CD4-positive, alpha-beta memory T cell (primary cell): ENCODE measurements at regions of chr7 and their contacts with region 1.

Region 1: GRCh38 chr7:33932832-33933468 is 27.6 kb downstream of the BMPER start:
- DNase-seq: peak; percentile 40 to 49 (median 47)
- H3K4me3 ChIP-seq: no peak overlapping the region
- H3K4me3 Mint-ChIP-seq: no peak overlapping the region
- H3K27ac ChIP-seq: no peak overlapping the region
- H3K27ac Mint-ChIP-seq: no peak overlapping the region
- H3K4me1 ChIP-seq: no peaks in the 10 kb centered on the region
- H3K4me1 Mint-ChIP-seq: peaks cover 0 to 3% (median under 1%) of the 10 kb centered on the region in 4 donors
- H3K27me3 ChIP-seq: no peaks in the 10 kb centered on the region
- H3K27me3 Mint-ChIP-seq: peaks cover 1 to 4% of the 10 kb centered on the region in 2 donors

Region 2: DNA sequence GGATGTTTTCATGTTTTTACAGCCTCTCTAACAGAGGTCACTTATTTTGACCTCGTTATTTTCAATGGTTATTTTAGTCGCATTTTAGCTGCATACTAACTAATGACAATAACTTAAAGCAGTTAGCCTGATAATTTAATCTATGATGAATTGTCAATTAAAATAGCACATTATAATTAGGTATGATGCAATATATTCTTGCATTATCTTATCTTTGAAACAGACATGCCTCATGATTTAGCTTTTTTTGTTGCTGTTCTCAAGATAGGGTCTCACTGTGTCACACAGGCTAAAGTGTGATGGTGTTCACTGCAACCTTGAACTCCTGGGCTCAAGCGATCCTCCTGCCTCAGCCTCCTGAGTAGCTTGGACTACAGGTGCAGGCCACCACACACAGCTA is 1167.8 kb before region 1 on chr7:
- CTCF ChIA-PET with region 1: interaction called, 3 read pairs
- POLR2A ChIA-PET with region 1: no interaction called
- intact Hi-C with region 1: loop called (anchors 2 kb)
- DNase-seq: no peak
- H3K4me3 ChIP-seq: no peak overlapping the region
- H3K4me3 Mint-ChIP-seq: no peak overlapping the region
- H3K27ac ChIP-seq: no peak overlapping the region
- H3K27ac Mint-ChIP-seq: no peak overlapping the region
- H3K4me1 ChIP-seq: no peaks in the 10 kb centered on the region
- H3K4me1 Mint-ChIP-seq: peaks cover 5 to 15% (median 7%) of the 10 kb centered on the region in 4 donors
- H3K27me3 ChIP-seq: peaks cover 4% of the 10 kb centered on the region
- H3K27me3 Mint-ChIP-seq: peaks cover 37 to 42% of the 10 kb centered on the region in 2 donors

Region 3: GRCh38 chr7:33185786-33186185 is 747.2 kb before region 1 on chr7:
- CTCF ChIA-PET with region 1: interaction called, 37 read pairs
- POLR2A ChIA-PET with region 1: no interaction called
- intact Hi-C with region 1: no loop called
- DNase-seq: peak in 4 of 5 donors; percentile 25 to 46 (median 30)
- H3K4me3 ChIP-seq: no peak overlapping the region
- H3K4me3 Mint-ChIP-seq: no peak overlapping the region
- H3K27ac ChIP-seq: no peak overlapping the region
- H3K27ac Mint-ChIP-seq: no peak overlapping the region
- H3K4me1 ChIP-seq: peaks cover 5% of the 10 kb centered on the region
- H3K4me1 Mint-ChIP-seq: peaks cover 5 to 11% (median 9%) of the 10 kb centered on the region in 4 donors
- H3K27me3 ChIP-seq: no peaks in the 10 kb centered on the region
- H3K27me3 Mint-ChIP-seq: no peaks in the 10 kb centered on the region

Region 4: DNA sequence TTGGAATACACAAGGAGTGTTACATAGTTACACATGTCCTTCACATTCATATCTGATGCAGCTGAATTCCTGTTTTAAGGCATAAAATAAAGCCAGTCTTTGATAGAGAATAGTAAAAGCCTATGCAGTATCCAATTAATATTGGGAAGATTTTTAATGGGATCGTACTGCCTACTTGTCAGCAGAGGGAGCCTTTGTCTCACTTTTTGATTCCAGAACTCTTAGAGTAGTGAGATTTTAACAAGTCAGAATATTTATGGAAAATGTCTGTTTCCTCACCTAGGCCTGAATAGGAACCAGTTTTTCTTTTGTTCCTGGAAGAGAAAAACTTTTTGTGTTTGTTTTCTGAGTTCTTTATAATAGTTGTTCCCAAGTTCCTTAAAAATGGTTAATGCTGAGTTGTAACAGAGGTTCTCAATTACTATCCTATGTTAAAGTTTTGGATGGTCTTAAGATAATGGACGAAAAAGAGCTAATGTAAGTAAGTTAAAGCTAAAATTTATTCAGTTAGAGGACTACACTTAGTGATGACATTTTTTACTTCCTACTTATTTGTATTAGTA is 689.5 kb before region 1 on chr7:
- CTCF ChIA-PET with region 1: interaction called, 12 read pairs
- POLR2A ChIA-PET with region 1: no interaction called
- intact Hi-C with region 1: no loop called
- DNase-seq: no peak
- H3K4me3 ChIP-seq: no peak overlapping the region
- H3K4me3 Mint-ChIP-seq: no peak overlapping the region
- H3K27ac ChIP-seq: no peak overlapping the region
- H3K27ac Mint-ChIP-seq: peak overlapping the region in 3 of 7 donors; percentile 22 to 57 (median 54)
- H3K4me1 ChIP-seq: no peaks in the 10 kb centered on the region
- H3K4me1 Mint-ChIP-seq: no peaks in the 10 kb centered on the region
- H3K27me3 ChIP-seq: no peaks in the 10 kb centered on the region
- H3K27me3 Mint-ChIP-seq: no peaks in the 10 kb centered on the region

Region 5: GRCh38 chr7:33868159-33868558 is 64.8 kb before region 1 on chr7:
- CTCF ChIA-PET with region 1: no interaction called
- POLR2A ChIA-PET with region 1: no interaction called
- intact Hi-C with region 1: no loop called
- DNase-seq: no peak
- H3K4me3 ChIP-seq: no peak overlapping the region
- H3K4me3 Mint-ChIP-seq: no peak overlapping the region
- H3K27ac ChIP-seq: no peak overlapping the region
- H3K27ac Mint-ChIP-seq: no peak overlapping the region
- H3K4me1 ChIP-seq: no peaks in the 10 kb centered on the region
- H3K4me1 Mint-ChIP-seq: no peaks in the 10 kb centered on the region
- H3K27me3 ChIP-seq: no peaks in the 10 kb centered on the region
- H3K27me3 Mint-ChIP-seq: peaks cover 0 to 1% of the 10 kb centered on the region in 2 donors

Region 6: DNA sequence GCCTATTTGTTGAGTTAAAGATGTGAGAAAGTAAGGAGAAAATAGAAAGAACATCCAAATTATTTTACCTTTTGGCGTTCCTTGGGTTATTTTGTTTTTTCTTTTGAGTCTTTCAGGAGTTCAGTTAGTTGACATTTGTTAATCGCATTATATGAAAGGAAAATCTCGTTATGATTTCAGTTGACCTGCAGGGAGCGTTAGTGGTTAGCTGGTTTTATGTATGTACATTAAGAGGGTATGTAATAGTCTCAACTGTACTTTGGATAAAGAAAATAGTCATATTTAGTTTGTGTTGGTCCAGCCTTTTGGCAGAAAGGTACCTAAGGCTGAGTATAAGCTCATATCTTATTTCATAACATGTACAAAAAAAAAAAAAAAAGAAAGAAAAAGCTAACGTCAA is 23.6 kb before region 1 on chr7:
- CTCF ChIA-PET with region 1: interaction called, 15 read pairs
- POLR2A ChIA-PET with region 1: no interaction called
- intact Hi-C with region 1: no loop called
- DNase-seq: no peak
- H3K4me3 ChIP-seq: no peak overlapping the region
- H3K4me3 Mint-ChIP-seq: no peak overlapping the region
- H3K27ac ChIP-seq: no peak overlapping the region
- H3K27ac Mint-ChIP-seq: no peak overlapping the region
- H3K4me1 ChIP-seq: no peaks in the 10 kb centered on the region
- H3K4me1 Mint-ChIP-seq: peaks cover 0 to 6% (median 2%) of the 10 kb centered on the region in 4 donors
- H3K27me3 ChIP-seq: peaks cover 15% of the 10 kb centered on the region
- H3K27me3 Mint-ChIP-seq: peaks cover 24 to 27% of the 10 kb centered on the region in 2 donors

Region 7: GRCh38 chr7:33921216-33921938 is 11.6 kb before region 1 on chr7:
- CTCF ChIA-PET with region 1: interaction called, 14 read pairs
- POLR2A ChIA-PET with region 1: no interaction called
- intact Hi-C with region 1: no loop called
- DNase-seq: no peak
- H3K4me3 ChIP-seq: no peak overlapping the region
- H3K4me3 Mint-ChIP-seq: no peak overlapping the region
- H3K27ac ChIP-seq: no peak overlapping the region
- H3K27ac Mint-ChIP-seq: no peak overlapping the region
- H3K4me1 ChIP-seq: no peaks in the 10 kb centered on the region
- H3K4me1 Mint-ChIP-seq: no peaks in the 10 kb centered on the region
- H3K27me3 ChIP-seq: no peaks in the 10 kb centered on the region
- H3K27me3 Mint-ChIP-seq: peaks cover 5 to 14% of the 10 kb centered on the region in 2 donors

Region 8: GRCh38 chr7:34025600-34025999 is 92.7 kb after region 1 on chr7:
- CTCF ChIA-PET with region 1: no interaction called
- POLR2A ChIA-PET with region 1: no interaction called
- intact Hi-C with region 1: no loop called
- DNase-seq: no peak
- H3K4me3 ChIP-seq: no peak overlapping the region
- H3K4me3 Mint-ChIP-seq: no peak overlapping the region
- H3K27ac ChIP-seq: no peak overlapping the region
- H3K27ac Mint-ChIP-seq: no peak overlapping the region
- H3K4me1 ChIP-seq: no peaks in the 10 kb centered on the region
- H3K4me1 Mint-ChIP-seq: no peaks in the 10 kb centered on the region
- H3K27me3 ChIP-seq: no peaks in the 10 kb centered on the region
- H3K27me3 Mint-ChIP-seq: no peaks in the 10 kb centered on the region

Region 9: GRCh38 chr7:34184466-34184865 is 251.5 kb after region 1 on chr7:
- CTCF ChIA-PET with region 1: no interaction called
- POLR2A ChIA-PET with region 1: no interaction called
- intact Hi-C with region 1: no loop called
- DNase-seq: no peak
- H3K4me3 ChIP-seq: no peak overlapping the region
- H3K4me3 Mint-ChIP-seq: no peak overlapping the region
- H3K27ac ChIP-seq: no peak overlapping the region
- H3K27ac Mint-ChIP-seq: no peak overlapping the region
- H3K4me1 ChIP-seq: no peaks in the 10 kb centered on the region
- H3K4me1 Mint-ChIP-seq: no peaks in the 10 kb centered on the region
- H3K27me3 ChIP-seq: no peaks in the 10 kb centered on the region
- H3K27me3 Mint-ChIP-seq: no peaks in the 10 kb centered on the region

Region 10: GRCh38 chr7:35758421-35758820 is 1825.5 kb after region 1 on chr7:
- CTCF ChIA-PET with region 1: no interaction called
- POLR2A ChIA-PET with region 1: no interaction called
- intact Hi-C with region 1: no loop called
- DNase-seq: peak in 1 of 5 donors; percentile 5
- H3K4me3 ChIP-seq: no peak overlapping the region
- H3K4me3 Mint-ChIP-seq: no peak overlapping the region
- H3K27ac ChIP-seq: no peak overlapping the region
- H3K27ac Mint-ChIP-seq: no peak overlapping the region
- H3K4me1 ChIP-seq: no peaks in the 10 kb centered on the region
- H3K4me1 Mint-ChIP-seq: peaks cover 2 to 6% (median 4%) of the 10 kb centered on the region in 4 donors
- H3K27me3 ChIP-seq: no peaks in the 10 kb centered on the region
- H3K27me3 Mint-ChIP-seq: no peaks in the 10 kb centered on the region